ENCODE measurements at regions of chr14 and their contacts with region 1.

Region 1: DNA sequence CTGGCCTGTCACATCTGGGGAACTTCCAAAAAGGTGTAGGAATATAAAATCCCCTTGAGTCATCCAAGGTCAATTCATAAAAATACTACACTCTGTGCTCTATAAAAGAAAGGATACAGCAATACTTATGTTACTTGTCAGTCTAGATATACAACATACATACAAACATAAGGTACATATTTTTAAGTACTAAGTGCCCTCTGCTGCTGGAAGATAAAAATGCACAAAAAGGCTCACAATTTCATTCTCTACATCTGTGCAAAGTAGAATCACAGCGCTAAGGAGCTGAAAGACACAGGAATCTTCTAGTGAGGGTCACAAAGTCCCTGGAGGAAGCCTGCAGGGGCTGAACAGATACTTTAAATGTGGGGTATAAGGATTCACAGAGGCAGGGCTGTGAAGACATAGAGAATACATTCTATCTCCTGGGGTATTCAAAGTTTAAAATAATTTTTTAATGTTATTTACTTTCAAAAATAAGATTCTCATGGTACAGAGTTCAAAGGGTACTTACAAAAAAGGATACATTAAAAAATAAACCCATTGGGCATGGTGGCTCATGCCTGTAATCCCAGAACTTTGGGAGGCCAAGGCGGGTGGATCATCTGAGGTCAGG is 10.2 kb upstream of the GOLGA5 start:
- DNase-seq: peak; percentile 5 to 40 (median 17)
- ATAC-seq: peak; percentile 81
- H3K4me3 ChIP-seq: no peak overlapping the region
- H3K27ac ChIP-seq: no peak overlapping the region
- H3K4me1 ChIP-seq: peaks cover 0 to 11% of the 10 kb centered on the region in 2 experiments; a peak in 3 of 5 replicates
- H3K27me3 ChIP-seq: no peaks in the 10 kb centered on the region
- CTCF ChIP-seq: peak; percentile 45 to 68 (median 46); a peak in 4 of 6 replicates
- EP300 ChIP-seq: no peak
- POLR2A ChIP-seq: no peak
- RAD21 ChIP-seq: peak; percentile 78 to 83

Region 2: GRCh38 chr14:92686900-92687444 is 97.0 kb before region 1 on chr14:
- CTCF ChIA-PET with region 1: interaction called, 14 read pairs
- POLR2A ChIA-PET with region 1: no interaction called
- in situ Hi-C with region 1: no loop called
- intact Hi-C with region 1: no loop called
- DNase-seq: peak; percentile 62 to 88 (median 84)
- ATAC-seq: peak; percentile 94
- H3K4me3 ChIP-seq: no peak overlapping the region
- H3K27ac ChIP-seq: no peak overlapping the region
- H3K4me1 ChIP-seq: peaks cover 0 to 22% of the 10 kb centered on the region in 2 experiments; a peak in 2 of 5 replicates
- H3K27me3 ChIP-seq: peaks cover 0 to 10% of the 10 kb centered on the region in 2 experiments; a peak in 2 of 5 replicates
- CTCF ChIP-seq: peak; percentile 75 to 88 (median 82)
- EP300 ChIP-seq: no peak
- POLR2A ChIP-seq: no peak
- RAD21 ChIP-seq: peak; percentile 54 to 66

Region 3: GRCh38 chr14:92698393-92698792 is 85.5 kb before region 1 on chr14:
- CTCF ChIA-PET with region 1: no interaction called
- POLR2A ChIA-PET with region 1: no interaction called
- in situ Hi-C with region 1: no loop called
- intact Hi-C with region 1: no loop called
- DNase-seq: no peak
- ATAC-seq: no peak
- H3K4me3 ChIP-seq: no peak overlapping the region
- H3K27ac ChIP-seq: no peak overlapping the region
- H3K4me1 ChIP-seq: no peaks in the 10 kb centered on the region
- H3K27me3 ChIP-seq: peaks cover 0 to 24% of the 10 kb centered on the region in 2 experiments; a peak in 3 of 5 replicates
- CTCF ChIP-seq: no peak
- EP300 ChIP-seq: no peak
- POLR2A ChIP-seq: no peak
- RAD21 ChIP-seq: no peak

Region 4: GRCh38 chr14:92717571-92718042 is 66.3 kb before region 1 on chr14:
- CTCF ChIA-PET with region 1: interaction called, 27 read pairs
- POLR2A ChIA-PET with region 1: interaction called, 3 read pairs
- in situ Hi-C with region 1: loop called (anchors 5 kb)
- intact Hi-C with region 1: loop called (anchors 1 kb)
- DNase-seq: no peak
- ATAC-seq: no peak
- H3K4me3 ChIP-seq: no peak overlapping the region
- H3K27ac ChIP-seq: no peak overlapping the region
- H3K4me1 ChIP-seq: no peaks in the 10 kb centered on the region; a peak in 1 of 5 replicates
- H3K27me3 ChIP-seq: peaks cover 2 to 19% of the 10 kb centered on the region in 2 experiments; a peak in 4 of 5 replicates
- CTCF ChIP-seq: no peak
- EP300 ChIP-seq: no peak
- POLR2A ChIP-seq: no peak
- RAD21 ChIP-seq: no peak

Region 5: DNA sequence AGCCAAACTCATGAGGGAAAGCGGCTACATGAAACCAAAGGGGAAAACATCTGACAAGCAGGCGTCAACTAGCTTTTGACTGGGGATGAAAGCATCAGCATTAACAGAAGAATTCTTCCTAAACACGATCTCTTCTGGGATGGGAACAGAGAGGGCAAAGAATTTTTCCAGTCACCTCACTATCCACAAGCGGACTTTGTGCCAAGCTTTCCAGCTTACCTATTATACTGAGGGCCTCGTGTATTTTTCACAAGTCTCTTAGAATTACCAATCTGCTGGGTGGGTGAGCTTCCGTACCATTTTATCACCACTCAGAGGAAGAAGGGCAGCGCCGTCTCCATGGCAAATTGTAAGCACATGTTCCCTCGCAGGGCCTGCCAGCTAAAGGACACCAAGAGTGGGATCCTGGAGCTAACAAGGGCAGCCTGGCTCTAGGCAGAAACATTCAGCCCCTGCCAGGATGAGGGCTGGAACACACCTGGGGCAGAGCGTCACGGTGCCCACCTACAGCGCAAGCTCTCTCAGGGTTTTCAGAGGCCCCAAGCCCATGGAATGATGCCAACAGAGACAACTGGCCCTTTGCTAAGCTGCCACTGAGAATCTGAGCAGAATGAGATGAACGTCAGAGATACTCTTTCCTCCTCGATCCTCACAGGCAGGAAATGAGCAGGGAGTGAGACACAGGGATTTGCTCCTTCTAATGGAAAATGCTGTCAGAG is 213.6 kb after region 1 on chr14:
- CTCF ChIA-PET with region 1: no interaction called
- POLR2A ChIA-PET with region 1: no interaction called
- in situ Hi-C with region 1: no loop called
- intact Hi-C with region 1: no loop called
- DNase-seq: no peak
- ATAC-seq: no peak
- H3K4me3 ChIP-seq: no peak overlapping the region
- H3K27ac ChIP-seq: no peak overlapping the region
- H3K4me1 ChIP-seq: peaks cover 25 to 27% of the 10 kb centered on the region in 2 experiments; a peak in 4 of 5 replicates
- H3K27me3 ChIP-seq: no peaks in the 10 kb centered on the region
- CTCF ChIP-seq: no peak
- EP300 ChIP-seq: no peak
- POLR2A ChIP-seq: no peak
- RAD21 ChIP-seq: no peak